A673 (cell line): ENCODE measurements at regions of chr9 and their contacts with region 1.

Region 1: GRCh38 chr9:26579056-26579455 is 313.5 kb downstream of the CAAP1 start:
- DNase-seq: no peak
- H3K4me3 ChIP-seq: no peak overlapping the region
- H3K27ac ChIP-seq: no peak overlapping the region
- H3K4me1 ChIP-seq: no peaks in the 10 kb centered on the region
- H3K27me3 ChIP-seq: no peaks in the 10 kb centered on the region
- CTCF ChIP-seq: no peak

Region 2: DNA sequence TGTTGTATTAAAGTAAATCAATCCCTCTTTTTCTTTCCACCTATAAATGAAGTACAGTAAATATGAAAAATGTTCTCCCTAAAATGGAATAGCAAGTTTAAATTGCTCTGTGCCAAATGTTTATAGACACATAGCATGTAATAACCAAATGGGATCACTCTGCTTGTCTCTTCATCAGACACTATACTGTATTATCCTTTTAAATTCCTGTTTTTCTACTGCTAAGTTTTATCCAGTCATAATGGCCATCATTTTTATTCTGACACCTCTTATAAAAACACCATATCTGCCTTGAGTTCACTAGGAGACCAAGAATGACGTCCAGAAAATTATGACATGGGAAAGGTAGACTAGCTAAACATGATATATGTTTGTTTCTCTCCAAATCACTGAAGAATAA is 60.7 kb after region 1 on chr9:
- CTCF ChIA-PET with region 1: no interaction called
- POLR2A ChIA-PET with region 1: no interaction called
- intact Hi-C with region 1: loop called (anchors 10 kb)
- DNase-seq: no peak
- H3K4me3 ChIP-seq: no peak overlapping the region
- H3K27ac ChIP-seq: no peak overlapping the region
- H3K4me1 ChIP-seq: no peaks in the 10 kb centered on the region
- H3K27me3 ChIP-seq: no peaks in the 10 kb centered on the region
- CTCF ChIP-seq: no peak